BJ (cell line): ENCODE measurements at regions of chr12 and their contacts with region 1.

Region 1: DNA sequence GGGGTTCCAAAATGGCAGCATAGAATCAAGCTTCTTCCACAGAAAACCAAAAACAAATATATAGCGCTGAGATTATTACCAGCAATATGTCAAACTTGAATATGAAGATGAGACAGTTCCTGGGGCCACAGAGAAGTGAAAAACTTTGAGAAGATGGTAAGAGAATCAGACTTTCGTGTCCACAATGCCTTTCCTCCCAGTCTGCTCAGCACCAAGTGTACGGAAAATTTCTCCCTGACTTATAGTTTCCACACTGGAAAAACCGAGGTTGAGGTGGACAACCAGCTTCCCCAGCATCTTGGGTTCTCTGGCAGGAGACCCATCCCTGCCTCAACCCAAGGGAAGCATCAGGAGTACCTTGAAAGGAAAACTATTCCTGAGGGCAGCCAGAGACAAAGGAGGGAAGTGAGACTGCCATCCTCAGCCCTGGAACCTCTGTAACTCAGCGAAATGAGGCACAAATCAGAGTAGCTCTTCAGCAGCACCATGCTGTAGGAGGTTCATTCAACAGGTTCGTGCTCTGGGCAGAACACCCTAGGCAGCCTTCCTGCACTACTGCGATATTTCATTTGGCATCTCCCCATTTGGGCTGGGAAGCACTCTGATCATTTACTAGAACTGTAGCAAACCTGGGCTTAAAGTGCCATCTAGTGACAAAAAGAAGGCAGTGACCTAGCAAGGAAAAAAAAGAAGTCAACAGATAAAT is 52.4 kb upstream of the CAPRIN2 start:
- DNase-seq: no peak
- H3K4me3 ChIP-seq: no peak overlapping the region
- H3K27me3 ChIP-seq: no peaks in the 10 kb centered on the region; the same call in 1 of the 2 replicates
- CTCF ChIP-seq: peak; percentile 72

Region 2: DNA sequence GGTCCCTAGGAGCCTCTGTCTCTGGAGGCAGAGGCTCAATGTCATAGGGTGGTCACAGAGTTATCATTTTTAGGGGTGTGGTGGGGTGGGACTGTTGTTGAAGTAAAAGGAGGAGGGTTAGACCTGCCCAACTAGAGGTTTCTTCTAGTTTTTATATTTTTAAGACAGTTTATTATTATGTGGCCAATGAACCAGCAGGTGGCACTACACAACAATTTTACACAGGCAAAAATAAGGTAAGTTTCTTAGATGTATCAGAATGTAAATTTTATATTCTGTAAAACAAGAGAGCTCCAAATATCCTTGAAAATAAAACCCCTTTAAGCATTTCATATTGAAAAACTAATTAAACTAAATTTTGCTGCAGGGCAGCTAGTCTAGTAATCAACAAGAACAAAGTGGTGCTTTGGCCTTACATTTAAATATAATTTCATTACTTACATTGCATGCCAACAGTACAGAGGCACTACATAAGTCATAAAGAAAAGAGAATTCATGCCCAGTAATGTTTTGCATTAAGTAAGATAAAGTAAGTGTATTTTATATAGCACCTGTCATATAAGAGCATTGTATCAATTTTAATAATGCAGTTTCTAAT is 1287.5 kb before region 1 on chr12:
- CTCF ChIA-PET with region 1: interaction called, 14 read pairs
- POLR2A ChIA-PET with region 1: no interaction called
- DNase-seq: no peak
- H3K4me3 ChIP-seq: no peak overlapping the region
- H3K27me3 ChIP-seq: no peaks in the 10 kb centered on the region
- CTCF ChIP-seq: peak; percentile 46

Region 3: DNA sequence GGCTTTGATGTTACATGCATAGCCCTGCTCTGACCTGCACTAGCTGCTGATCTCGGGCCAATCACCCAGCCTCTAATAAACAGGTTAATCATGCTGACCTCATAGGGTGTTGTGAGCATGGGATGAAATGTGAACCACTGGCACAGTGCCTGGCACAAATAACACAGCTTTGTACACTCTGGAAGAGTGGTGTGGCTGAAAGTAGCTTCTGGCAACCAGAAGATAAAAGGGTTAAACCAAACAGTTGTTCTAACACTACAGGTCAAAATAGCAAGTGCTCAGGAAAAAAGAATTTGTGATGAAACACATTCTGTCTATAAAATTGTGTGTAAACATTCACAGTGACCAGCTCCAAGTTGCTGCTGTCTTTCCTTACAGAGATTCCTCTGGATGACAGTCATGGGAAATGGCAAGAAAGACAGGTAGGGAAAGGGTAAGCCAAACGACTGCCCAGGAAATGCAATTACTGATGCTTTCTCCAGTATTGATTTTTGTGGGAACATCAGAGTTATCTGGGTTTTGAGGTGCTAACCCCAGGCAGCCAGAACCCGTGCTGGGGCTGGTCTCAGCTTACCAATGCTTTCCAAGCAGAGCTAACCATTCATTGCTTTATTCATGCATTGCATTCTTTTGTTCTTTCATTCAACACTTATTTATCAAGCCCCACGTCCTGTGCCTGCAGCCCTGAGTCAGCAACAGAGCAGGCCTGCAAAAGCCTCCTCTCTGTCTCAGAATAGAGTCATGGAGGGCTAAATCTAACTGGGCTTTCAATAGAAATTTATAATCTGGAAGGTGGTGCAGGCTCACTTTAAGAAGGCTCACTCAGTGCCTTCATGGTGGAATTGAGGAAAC is 14.3 kb before region 1 on chr12:
- CTCF ChIA-PET with region 1: interaction called, 13 read pairs
- POLR2A ChIA-PET with region 1: no interaction called
- DNase-seq: no peak
- H3K4me3 ChIP-seq: no peak overlapping the region
- H3K27me3 ChIP-seq: no peaks in the 10 kb centered on the region
- CTCF ChIP-seq: no peak

Region 4: DNA sequence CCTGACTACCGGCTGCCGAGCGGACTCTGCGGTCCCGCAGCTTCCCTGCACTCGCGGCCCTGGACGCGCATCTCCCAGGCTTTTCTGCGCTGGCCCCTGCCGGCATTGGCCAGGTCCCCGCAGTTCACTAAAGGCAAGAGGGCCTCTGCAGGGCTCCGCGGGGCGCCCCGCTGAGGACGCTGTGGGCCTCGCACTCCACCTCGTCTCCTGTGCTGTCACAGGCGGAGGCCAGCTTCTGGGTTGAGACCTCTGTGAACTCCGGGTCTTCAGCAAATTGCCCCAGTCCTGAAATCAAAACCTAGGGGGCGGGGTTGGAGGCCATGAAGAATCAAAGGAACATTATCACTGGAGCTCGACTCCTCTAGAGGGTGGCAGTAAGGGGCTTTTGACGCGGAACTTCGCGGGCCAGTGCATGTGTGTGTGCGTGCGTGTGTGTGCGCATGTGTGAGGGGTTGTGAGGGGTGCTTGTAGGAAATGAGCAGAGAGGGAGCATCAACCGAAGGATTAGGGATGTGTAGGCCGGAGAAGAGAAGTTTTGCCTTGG is 16.1 kb after region 1 on chr12:
- CTCF ChIA-PET with region 1: no interaction called
- POLR2A ChIA-PET with region 1: no interaction called
- DNase-seq: no peak
- H3K4me3 ChIP-seq: no peak overlapping the region
- H3K27me3 ChIP-seq: peaks cover 8% of the 10 kb centered on the region
- CTCF ChIP-seq: no peak